ENCODE measurements at regions of chr20 and their contacts with region 1.

Region 1: DNA sequence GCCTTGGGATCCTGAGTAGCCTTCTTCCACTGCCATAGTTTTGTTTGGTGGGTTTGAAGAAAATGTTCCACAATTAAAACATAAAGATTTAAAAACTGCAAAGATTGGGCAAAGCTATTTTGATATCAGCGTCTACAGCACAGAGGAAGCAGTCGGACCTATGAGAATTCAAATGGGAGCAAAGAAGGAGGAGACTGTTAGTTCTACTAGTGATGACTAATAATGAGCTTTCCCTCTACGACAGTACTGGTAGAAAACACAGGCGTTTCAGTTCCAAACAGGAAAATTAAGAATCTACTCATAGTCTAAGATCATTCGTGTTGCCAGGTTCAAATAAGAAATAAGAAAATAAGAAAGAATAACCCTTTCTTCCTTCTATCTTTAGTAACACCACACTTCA is 121.2 kb downstream of the INSM1 start:
- DNase-seq: no peak
- H3K4me3 Mint-ChIP-seq: peak overlapping the region; percentile 79
- H3K27ac Mint-ChIP-seq: peak overlapping the region; percentile 91
- H3K4me1 Mint-ChIP-seq: peaks cover 50% of the 10 kb centered on the region
- H3K27me3 Mint-ChIP-seq: no peaks in the 10 kb centered on the region

Region 2: GRCh38 chr20:20369250-20370093 is 119.6 kb before region 1 on chr20:
- intact Hi-C with region 1: loop called (anchors 1 kb)
- DNase-seq: peak; percentile 62
- H3K4me3 Mint-ChIP-seq: peak overlapping the region; percentile 83
- H3K27ac Mint-ChIP-seq: peak overlapping the region; percentile 83
- H3K4me1 Mint-ChIP-seq: peaks cover 19% of the 10 kb centered on the region
- H3K27me3 Mint-ChIP-seq: peaks cover 56% of the 10 kb centered on the region

Region 3: DNA sequence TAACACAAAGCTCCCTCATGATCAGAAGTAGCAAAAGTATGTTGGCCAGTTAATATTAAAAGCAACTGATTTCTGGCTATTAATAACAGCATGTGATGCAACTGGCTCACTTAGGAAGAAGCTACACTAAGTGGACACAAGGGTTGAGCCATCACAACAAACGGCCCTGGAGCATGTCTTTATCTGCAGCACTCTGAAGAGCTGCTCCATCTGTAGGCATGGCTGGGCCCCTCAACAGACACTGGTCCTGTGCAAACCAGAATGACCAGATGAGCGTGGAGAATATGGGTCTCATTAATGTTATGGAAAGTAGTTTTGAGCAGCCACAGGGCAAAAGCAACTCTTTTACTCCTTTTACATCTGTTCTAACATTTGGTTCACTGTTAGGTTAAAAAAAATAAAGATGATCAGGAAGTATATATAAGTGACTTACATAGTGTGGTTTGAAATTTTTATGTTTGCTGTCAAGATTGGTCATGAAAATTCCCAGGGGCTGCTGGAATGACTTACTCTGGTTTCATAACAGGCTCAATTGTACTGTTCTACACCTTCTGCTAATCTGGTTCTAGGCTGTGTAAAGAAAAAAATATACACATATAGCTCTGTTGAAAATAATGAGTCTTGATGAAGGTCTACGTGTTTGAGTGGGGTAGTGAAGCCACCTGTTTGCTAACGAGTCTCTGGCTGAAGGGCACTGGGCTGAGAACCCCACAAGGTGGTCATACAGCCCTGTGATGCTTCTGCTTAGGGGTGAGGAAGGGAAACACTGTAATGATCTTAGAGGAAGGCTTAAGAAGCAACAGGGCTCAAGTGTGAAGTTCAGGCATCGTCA is 63.0 kb before region 1 on chr20:
- intact Hi-C with region 1: loop called (anchors 2 kb)
- DNase-seq: no peak
- H3K4me3 Mint-ChIP-seq: peak overlapping the region; percentile 10
- H3K27ac Mint-ChIP-seq: peak overlapping the region; percentile 89
- H3K4me1 Mint-ChIP-seq: peaks cover 40% of the 10 kb centered on the region
- H3K27me3 Mint-ChIP-seq: no peaks in the 10 kb centered on the region

Region 4: DNA sequence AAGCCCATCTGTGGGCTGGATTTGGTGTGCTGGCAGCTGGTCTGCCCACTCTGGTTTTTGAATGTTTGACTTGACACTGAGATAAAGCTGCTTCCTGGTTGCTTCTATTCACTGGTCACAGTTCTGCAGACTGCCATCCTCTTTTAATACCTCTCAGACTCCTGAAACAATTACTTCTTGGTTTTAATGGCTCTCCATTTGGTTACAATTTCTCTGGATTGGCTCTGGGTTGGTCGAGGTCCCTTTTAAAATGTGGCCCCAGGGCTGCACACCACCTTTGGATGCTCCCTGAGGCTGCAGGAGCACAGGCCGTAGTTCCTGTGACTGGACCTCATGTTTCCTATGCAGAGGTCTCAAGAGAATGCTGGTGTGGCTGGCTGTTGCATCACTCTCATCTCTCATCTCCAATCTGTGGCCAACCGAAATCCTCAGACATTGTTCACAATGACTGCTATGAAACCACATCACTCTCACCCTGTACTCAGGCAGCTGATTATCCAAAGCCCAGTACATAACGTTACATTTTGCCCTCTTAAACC is 22.6 kb before region 1 on chr20:
- intact Hi-C with region 1: loop called (anchors 1 kb)
- DNase-seq: no peak
- H3K4me3 Mint-ChIP-seq: no peak overlapping the region
- H3K27ac Mint-ChIP-seq: peak overlapping the region; percentile 76
- H3K4me1 Mint-ChIP-seq: peaks cover 36% of the 10 kb centered on the region
- H3K27me3 Mint-ChIP-seq: no peaks in the 10 kb centered on the region

Region 5: GRCh38 chr20:20561841-20562240 is 72.8 kb after region 1 on chr20:
- intact Hi-C with region 1: no loop called
- DNase-seq: no peak
- H3K4me3 Mint-ChIP-seq: no peak overlapping the region
- H3K27ac Mint-ChIP-seq: peak overlapping the region; percentile 17
- H3K4me1 Mint-ChIP-seq: peaks cover 19% of the 10 kb centered on the region
- H3K27me3 Mint-ChIP-seq: no peaks in the 10 kb centered on the region

Region 6: DNA sequence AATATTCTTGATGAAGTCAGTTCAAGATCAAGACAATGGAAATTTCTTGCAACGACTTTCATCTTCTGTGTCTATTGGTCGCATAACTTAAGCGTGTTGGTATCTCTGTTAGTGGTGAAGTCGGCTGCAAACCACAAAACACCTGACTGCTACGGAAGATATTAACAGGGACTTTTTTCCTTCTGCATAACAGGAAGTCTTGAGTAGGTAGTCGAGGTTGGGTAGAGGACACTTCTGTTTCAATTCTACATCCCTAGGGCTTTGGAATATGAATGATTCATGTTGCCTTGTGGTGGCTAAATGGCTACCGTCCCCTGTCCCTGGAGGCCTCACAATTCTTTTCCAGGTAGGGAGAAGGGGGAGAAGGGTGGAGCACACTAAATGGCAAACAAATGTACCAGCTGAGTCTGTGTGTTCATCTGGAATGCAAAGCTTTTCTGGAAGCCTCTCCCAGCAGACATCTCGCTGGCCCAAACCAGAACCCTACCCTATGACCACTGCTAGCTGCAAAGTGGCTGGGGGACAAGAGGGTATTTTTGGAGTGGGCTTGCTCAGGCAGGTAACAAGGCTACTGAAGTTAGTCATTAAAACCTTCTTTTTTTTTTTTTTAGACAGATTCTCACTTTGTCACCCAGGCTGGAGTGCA is 1059.5 kb after region 1 on chr20:
- intact Hi-C with region 1: loop called (anchors 5 kb)
- DNase-seq: peak; percentile 86
- H3K4me3 Mint-ChIP-seq: peak overlapping the region; percentile 52
- H3K27ac Mint-ChIP-seq: peak overlapping the region; percentile 78
- H3K4me1 Mint-ChIP-seq: peaks cover 22% of the 10 kb centered on the region
- H3K27me3 Mint-ChIP-seq: no peaks in the 10 kb centered on the region

Measured in activated CD4-positive, alpha-beta T cell treated with anti-CD3 and anti-CD28 coated beads, Interleukin-2, amount 10 ng/mL, durations not matched to agents 24 days and 14 days (primary cell).